ENCODE measurements at regions of chr6 and their contacts with region 1.

Region 1: DNA sequence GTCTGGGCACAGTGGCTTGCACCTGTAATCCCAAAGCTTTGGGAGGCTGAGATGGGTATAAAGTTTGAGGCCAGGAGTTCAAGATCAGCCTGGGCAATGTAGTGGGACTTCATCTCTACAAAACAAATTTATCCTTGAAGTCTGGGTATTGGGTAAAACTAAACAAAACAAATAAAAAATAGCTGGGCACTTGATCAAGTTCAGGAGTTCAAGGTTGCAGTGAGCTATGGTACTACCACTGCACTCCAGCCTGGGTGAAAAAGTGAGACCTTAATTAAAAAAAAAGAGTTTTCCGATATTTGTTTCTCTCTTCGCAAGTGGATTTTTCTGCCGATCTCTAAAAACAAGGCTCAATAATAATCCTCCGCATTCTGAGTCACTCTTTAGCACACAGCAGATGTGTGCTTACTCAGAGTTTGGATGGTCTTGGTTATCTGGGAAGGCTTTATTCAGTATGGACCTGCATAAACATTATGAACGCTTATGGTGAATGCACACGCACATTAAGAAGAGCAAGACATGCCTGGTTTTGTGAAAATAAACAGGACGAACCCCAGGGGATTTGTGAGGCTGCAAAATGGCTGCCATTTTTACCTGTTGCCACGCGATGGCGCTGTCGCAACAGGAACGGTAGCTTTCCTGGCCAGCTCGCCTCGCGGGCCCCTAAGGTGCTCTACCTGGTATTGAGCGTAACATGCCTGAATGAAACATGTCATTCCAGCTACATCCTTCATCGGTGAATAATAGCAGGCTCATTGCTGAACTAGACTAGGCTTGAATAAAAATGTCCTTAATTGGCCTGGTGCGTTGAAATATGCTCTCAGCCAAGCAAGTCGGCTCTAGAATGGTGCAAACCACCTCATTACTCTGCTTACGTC is 6.0 kb downstream of the OPN5 start:
- DNase-seq: peak; percentile 58
- H3K4me3 Mint-ChIP-seq: no peak overlapping the region
- H3K27ac Mint-ChIP-seq: no peak overlapping the region
- H3K4me1 Mint-ChIP-seq: no peaks in the 10 kb centered on the region
- H3K27me3 Mint-ChIP-seq: peaks cover 43% of the 10 kb centered on the region

Region 2: GRCh38 chr6:47801984-47802383 is 14.1 kb after region 1 on chr6:
- CTCF ChIA-PET with region 1: interaction called, 27 read pairs
- POLR2A ChIA-PET with region 1: no interaction called
- DNase-seq: no peak
- H3K4me3 Mint-ChIP-seq: no peak overlapping the region
- H3K27ac Mint-ChIP-seq: no peak overlapping the region
- H3K4me1 Mint-ChIP-seq: no peaks in the 10 kb centered on the region
- H3K27me3 Mint-ChIP-seq: peaks cover 6% of the 10 kb centered on the region

Region 3: GRCh38 chr6:47897247-47897646 is 109.4 kb after region 1 on chr6:
- CTCF ChIA-PET with region 1: no interaction called
- POLR2A ChIA-PET with region 1: no interaction called
- DNase-seq: no peak
- H3K4me3 Mint-ChIP-seq: no peak overlapping the region
- H3K27ac Mint-ChIP-seq: no peak overlapping the region
- H3K4me1 Mint-ChIP-seq: no peaks in the 10 kb centered on the region
- H3K27me3 Mint-ChIP-seq: no peaks in the 10 kb centered on the region

Region 4: DNA sequence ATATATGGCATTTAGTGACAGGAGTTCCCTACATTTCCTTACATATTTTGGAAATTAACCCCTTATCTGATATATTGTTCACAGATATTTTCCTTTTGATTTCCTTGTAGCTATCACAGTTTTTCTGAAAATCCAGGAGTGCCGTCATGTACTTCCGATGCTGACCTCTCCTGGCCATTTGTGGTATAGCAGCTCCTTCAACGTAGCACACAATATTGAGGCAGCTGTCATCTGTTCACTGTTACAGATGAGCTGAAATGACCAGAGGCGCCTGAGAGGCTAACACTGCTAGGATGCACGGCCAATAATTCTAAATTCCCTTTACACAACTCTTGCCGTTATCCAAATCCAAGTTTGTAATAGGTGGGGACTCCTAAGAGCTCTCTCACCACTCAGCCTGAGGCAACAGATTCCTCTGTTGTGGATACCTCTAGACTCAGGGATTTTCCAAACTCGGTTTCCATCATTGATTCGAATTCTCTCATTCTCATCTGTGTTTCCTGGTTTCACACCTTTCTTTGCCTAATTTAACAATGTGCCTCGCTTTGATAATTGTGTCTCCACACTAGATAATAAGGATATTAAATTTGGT is 1622.2 kb after region 1 on chr6:
- CTCF ChIA-PET with region 1: interaction called, 16 read pairs
- POLR2A ChIA-PET with region 1: no interaction called
- DNase-seq: peak; percentile 58
- H3K4me3 Mint-ChIP-seq: no peak overlapping the region
- H3K27ac Mint-ChIP-seq: no peak overlapping the region
- H3K4me1 Mint-ChIP-seq: no peaks in the 10 kb centered on the region
- H3K27me3 Mint-ChIP-seq: no peaks in the 10 kb centered on the region

Measured in activated CD4-positive, alpha-beta memory T cell treated with anti-CD3 and anti-CD28 coated beads, Interleukin-2, amount 10 ng/mL, durations not matched to agents 7 days and 5 days (primary cell).